GM10248 (cell line): ENCODE measurements at regions of chr5 and their contacts with region 1.

Region 1: DNA sequence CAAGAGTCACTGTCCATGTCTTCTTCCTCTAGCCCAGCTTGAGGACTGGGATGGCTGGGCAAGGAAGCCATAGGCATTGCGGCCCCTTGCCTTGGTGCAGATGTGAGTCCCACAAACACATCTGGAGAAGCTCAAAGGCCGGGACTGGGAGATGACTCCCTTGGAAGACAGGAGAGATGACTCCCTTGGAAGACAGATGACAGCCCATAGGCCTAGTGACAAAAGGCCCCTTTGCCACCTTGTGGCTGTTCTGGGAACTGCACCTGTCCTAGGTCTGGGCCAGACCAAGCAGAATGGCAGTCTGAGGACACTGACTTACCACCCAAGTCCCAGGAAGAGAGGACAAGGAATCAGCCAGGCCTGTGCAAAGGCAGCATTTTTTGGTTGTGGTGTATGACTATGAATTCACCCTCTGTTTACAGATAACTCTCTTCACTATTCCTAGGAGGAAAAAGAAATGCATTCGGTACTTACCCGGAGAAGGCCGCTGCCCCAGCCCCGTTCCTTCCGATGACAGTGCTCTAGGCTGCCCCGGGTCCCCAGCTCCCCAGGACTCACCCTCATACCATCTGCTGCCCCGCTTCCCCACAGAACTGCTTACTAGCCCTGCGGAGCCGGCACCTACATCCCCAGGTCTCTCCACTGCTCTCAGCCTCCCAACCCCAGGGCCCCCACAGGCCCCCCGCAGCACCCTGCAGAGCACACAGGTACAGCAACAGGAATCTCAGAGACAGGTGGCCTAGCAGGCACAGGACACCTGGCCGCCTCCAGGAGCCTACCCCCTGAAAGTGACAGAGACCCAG is 30.8 kb downstream of the SKP1 start:
- DNase-seq: peak; percentile 79
- CTCF ChIP-seq: peak; percentile 98

Region 2: GRCh38 chr5:134026521-134027268 is 119.3 kb before region 1 on chr5:
- CTCF ChIA-PET with region 1: interaction called, 882 read pairs
- POLR2A ChIA-PET with region 1: no interaction called
- DNase-seq: peak; percentile 79
- CTCF ChIP-seq: peak; percentile 49

Region 3: GRCh38 chr5:134125039-134126015 is 20.7 kb before region 1 on chr5:
- CTCF ChIA-PET with region 1: no interaction called
- POLR2A ChIA-PET with region 1: no interaction called
- DNase-seq: no peak
- CTCF ChIP-seq: no peak

Region 4: GRCh38 chr5:134161513-134162395 is 15.8 kb after region 1 on chr5:
- CTCF ChIA-PET with region 1: interaction called, 16 read pairs
- POLR2A ChIA-PET with region 1: no interaction called
- DNase-seq: no peak
- CTCF ChIP-seq: no peak